CD4-positive, alpha-beta T cell (primary cell): ENCODE measurements at regions of chr10 and their contacts with region 1.

Region 1: DNA sequence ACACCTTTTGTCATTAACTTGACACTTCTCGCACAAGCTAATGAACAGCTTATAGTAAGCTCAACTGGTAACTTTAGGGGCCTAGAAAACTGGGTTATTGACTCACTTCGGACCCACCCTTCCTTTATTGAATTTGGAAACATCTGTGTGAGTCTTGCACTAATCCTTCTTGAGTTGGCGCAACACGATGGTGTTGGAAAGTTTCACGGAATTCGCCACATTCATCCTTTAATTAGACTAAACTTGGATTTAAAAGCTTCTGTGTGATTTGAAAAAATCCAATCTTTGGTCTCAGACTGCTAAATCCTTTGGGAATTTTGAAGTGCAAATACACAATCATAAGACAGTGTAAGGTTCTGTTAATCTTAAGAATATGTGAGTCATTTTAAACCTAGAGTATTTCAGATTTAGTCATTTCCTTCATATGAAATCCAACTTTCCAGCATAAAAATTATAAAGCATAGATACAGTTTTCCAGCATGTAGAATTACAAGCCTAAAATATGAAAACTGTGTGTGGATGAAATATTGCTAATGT is 15.1 kb downstream of the FZD8 start:
- DNase-seq: no peak
- ATAC-seq: no peak
- H3K4me3 ChIP-seq: no peak overlapping the region
- H3K4me3 Mint-ChIP-seq: no peak overlapping the region
- H3K27ac ChIP-seq: no peak overlapping the region
- H3K27ac Mint-ChIP-seq: no peak overlapping the region
- H3K4me1 ChIP-seq: no peaks in the 10 kb centered on the region
- H3K4me1 Mint-ChIP-seq: no peaks in the 10 kb centered on the region
- H3K27me3 ChIP-seq: peaks cover 3 to 19% of the 10 kb centered on the region in 2 experiments
- H3K27me3 Mint-ChIP-seq: peaks cover 42% of the 10 kb centered on the region
- CTCF ChIP-seq: no peak

Region 2: GRCh38 chr10:35546824-35547273 is 80.2 kb before region 1 on chr10:
- CTCF ChIA-PET with region 1: no interaction called
- POLR2A ChIA-PET with region 1: no interaction called
- intact Hi-C with region 1: no loop called
- DNase-seq: no peak
- ATAC-seq: no peak
- H3K4me3 ChIP-seq: no peak overlapping the region
- H3K4me3 Mint-ChIP-seq: no peak overlapping the region
- H3K27ac ChIP-seq: no peak overlapping the region
- H3K27ac Mint-ChIP-seq: no peak overlapping the region
- H3K4me1 ChIP-seq: no peaks in the 10 kb centered on the region
- H3K4me1 Mint-ChIP-seq: no peaks in the 10 kb centered on the region
- H3K27me3 ChIP-seq: no peaks in the 10 kb centered on the region
- H3K27me3 Mint-ChIP-seq: no peaks in the 10 kb centered on the region
- CTCF ChIP-seq: no peak

Region 3: DNA sequence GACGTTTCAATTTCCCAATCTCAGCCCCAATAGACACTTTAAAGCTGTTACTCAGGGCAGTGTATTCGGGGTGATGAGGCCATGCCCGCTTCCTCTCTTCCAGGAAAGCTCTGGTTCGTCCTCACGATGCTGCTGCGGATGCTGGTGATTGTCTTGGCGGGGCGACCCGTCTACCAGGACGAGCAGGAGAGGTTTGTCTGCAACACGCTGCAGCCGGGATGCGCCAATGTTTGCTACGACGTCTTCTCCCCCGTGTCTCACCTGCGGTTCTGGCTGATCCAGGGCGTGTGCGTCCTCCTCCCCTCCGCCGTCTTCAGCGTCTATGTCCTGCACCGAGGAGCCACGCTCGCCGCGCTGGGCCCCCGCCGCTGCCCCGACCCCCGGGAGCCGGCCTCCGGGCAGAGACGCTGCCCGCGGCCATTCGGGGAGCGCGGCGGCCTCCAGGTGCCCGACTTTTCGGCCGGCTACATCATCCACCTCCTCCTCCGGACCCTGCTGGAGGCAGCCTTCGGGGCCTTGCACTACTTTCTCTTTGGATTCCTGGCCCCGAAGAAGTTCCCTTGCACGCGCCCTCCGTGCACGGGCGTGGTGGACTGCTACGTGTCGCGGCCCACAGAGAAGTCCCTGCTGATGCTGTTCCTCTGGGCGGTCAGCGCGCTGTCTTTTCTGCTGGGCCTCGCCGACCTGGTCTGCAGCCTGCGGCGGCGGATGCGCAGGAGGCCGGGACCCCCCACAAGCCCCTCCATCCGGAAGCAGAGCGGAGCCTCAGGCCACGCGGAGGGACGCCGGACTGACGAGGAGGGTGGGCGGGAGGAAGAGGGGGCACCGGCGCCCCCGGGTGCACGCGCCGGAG is 19.3 kb before region 1 on chr10:
- CTCF ChIA-PET with region 1: no interaction called
- POLR2A ChIA-PET with region 1: no interaction called
- intact Hi-C with region 1: loop called in 1 of 2 experiments (anchors 2 kb)
- DNase-seq: no peak
- ATAC-seq: no peak
- H3K4me3 ChIP-seq: peak overlapping the region; percentile 37
- H3K4me3 Mint-ChIP-seq: peak overlapping the region; percentile 75
- H3K27ac ChIP-seq: no peak overlapping the region
- H3K27ac Mint-ChIP-seq: no peak overlapping the region
- H3K4me1 ChIP-seq: peaks cover 10% of the 10 kb centered on the region
- H3K4me1 Mint-ChIP-seq: peaks cover 6% of the 10 kb centered on the region
- H3K27me3 ChIP-seq: peaks cover 30 to 52% of the 10 kb centered on the region in 2 experiments
- H3K27me3 Mint-ChIP-seq: peaks cover 68% of the 10 kb centered on the region
- CTCF ChIP-seq: no peak

Region 4: GRCh38 chr10:36676756-36677430 is 1049.9 kb after region 1 on chr10:
- CTCF ChIA-PET with region 1: no interaction called
- POLR2A ChIA-PET with region 1: no interaction called
- intact Hi-C with region 1: no loop called
- DNase-seq: no peak
- ATAC-seq: no peak
- H3K4me3 ChIP-seq: no peak overlapping the region
- H3K4me3 Mint-ChIP-seq: no peak overlapping the region
- H3K27ac ChIP-seq: no peak overlapping the region
- H3K27ac Mint-ChIP-seq: no peak overlapping the region
- H3K4me1 ChIP-seq: no peaks in the 10 kb centered on the region
- H3K4me1 Mint-ChIP-seq: no peaks in the 10 kb centered on the region
- H3K27me3 ChIP-seq: no peaks in the 10 kb centered on the region
- H3K27me3 Mint-ChIP-seq: no peaks in the 10 kb centered on the region
- CTCF ChIP-seq: no peak